CD4-positive, alpha-beta T cell (primary cell): ENCODE measurements at regions of chr20 and their contacts with region 1.

Region 1: GRCh38 chr20:38057351-38057972 is 23.9 kb downstream of the RPRD1B start:
- DNase-seq: peak; percentile 62 to 86 (median 72)
- ATAC-seq: peak; percentile 91
- H3K4me3 ChIP-seq: no peak overlapping the region
- H3K4me3 Mint-ChIP-seq: no peak overlapping the region
- H3K27ac ChIP-seq: no peak overlapping the region
- H3K27ac Mint-ChIP-seq: peak overlapping the region; percentile 50
- H3K4me1 ChIP-seq: peaks cover 3% of the 10 kb centered on the region
- H3K4me1 Mint-ChIP-seq: peaks cover 29% of the 10 kb centered on the region
- H3K27me3 ChIP-seq: no peaks in the 10 kb centered on the region
- H3K27me3 Mint-ChIP-seq: no peaks in the 10 kb centered on the region
- CTCF ChIP-seq: peak; percentile 93

Region 2: GRCh38 chr20:38043512-38044300 is 13.8 kb before region 1 on chr20:
- CTCF ChIA-PET with region 1: interaction called, 11 read pairs
- POLR2A ChIA-PET with region 1: interaction called, 3 read pairs
- intact Hi-C with region 1: no loop called
- DNase-seq: peak in 3 of 14 experiments; percentile 17 to 36 (median 32)
- ATAC-seq: no peak
- H3K4me3 ChIP-seq: no peak overlapping the region
- H3K4me3 Mint-ChIP-seq: no peak overlapping the region
- H3K27ac ChIP-seq: no peak overlapping the region
- H3K27ac Mint-ChIP-seq: no peak overlapping the region
- H3K4me1 ChIP-seq: peaks cover 3% of the 10 kb centered on the region
- H3K4me1 Mint-ChIP-seq: peaks cover 55% of the 10 kb centered on the region
- H3K27me3 ChIP-seq: no peaks in the 10 kb centered on the region
- H3K27me3 Mint-ChIP-seq: no peaks in the 10 kb centered on the region
- CTCF ChIP-seq: no peak

Region 3: DNA sequence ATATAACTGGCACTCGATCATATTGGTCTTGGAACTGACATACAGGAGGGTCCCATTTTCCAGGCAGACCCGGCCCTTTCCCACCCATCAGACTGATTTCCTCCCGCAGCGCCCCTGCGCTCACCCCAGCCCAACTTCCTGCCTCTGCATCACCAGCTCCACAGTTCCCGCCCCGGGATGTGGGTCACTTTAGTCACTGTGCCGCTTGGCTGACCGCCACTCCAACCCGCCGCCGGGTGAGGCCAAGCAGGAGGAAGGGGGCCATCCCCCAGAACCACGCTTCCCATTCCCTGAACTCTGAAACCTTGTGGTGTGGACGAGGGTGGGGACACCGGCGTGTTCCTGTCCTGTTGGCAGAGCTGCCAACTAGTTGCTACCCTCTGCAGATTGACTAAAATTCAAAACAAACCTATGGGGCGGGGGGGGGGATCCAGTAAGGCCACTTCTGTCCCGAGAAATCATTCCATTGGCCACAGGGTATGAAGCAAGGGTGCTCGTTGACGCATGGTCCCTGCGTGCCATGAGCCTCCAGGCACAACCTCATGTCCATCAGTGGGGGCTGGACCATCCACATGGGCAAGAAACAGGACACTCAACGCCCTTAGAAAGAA is 95.3 kb after region 1 on chr20:
- CTCF ChIA-PET with region 1: no interaction called
- POLR2A ChIA-PET with region 1: no interaction called
- intact Hi-C with region 1: no loop called
- DNase-seq: peak in 3 of 14 experiments; percentile 45 to 52 (median 52)
- ATAC-seq: no peak
- H3K4me3 ChIP-seq: no peak overlapping the region
- H3K4me3 Mint-ChIP-seq: no peak overlapping the region
- H3K27ac ChIP-seq: no peak overlapping the region
- H3K27ac Mint-ChIP-seq: no peak overlapping the region
- H3K4me1 ChIP-seq: peaks cover 11% of the 10 kb centered on the region
- H3K4me1 Mint-ChIP-seq: peaks cover 7% of the 10 kb centered on the region
- H3K27me3 ChIP-seq: no peaks in the 10 kb centered on the region
- H3K27me3 Mint-ChIP-seq: peaks cover 18% of the 10 kb centered on the region
- CTCF ChIP-seq: no peak

Region 4: DNA sequence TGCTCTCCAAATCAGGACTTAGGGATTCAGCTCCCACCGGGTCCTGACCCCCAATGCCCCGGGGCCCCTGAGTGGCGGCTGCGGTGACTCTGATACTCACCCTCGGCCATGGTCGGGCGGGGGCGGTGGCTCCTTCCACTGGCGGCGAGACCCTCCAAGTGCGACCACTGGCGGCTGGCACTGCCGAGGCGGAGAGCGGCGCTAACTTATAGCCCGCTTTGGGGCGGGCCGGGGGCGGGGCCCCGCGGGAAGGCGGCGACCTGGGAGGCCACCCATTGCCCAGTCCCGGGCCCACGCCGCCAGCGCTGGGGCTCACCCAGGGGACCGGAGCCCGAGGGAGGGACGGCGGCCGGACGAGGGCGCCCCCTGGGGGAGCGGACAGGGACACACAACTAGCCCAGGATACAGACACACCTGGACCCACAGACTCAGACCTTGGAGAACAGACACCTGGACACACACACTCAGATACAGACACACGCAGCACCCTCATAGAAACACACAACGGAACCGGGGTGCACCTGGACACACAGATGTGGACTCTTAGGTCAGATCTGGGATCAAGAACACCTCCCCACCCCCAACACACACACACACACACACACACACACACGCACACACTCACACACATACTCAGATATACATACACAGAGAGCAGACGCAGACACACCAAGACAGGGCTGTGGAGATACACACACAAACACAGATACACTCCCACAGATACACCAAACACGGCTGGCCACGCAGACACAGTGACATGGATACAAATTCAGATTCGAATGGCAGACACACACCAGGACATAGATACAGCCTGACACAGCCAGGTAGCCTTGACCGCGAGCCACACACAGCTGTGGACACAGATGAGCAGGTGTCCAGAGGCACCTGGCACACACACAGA is 107.9 kb after region 1 on chr20 and contains the start of gene TGM2:
- CTCF ChIA-PET with region 1: interaction called, 3 read pairs
- POLR2A ChIA-PET with region 1: no interaction called
- intact Hi-C with region 1: loop called (anchors 5 kb)
- DNase-seq: peak in 11 of 14 experiments; percentile 1 to 70 (median 15)
- ATAC-seq: peak; percentile 39
- H3K4me3 ChIP-seq: no peak within 1 kb of the TSS
- H3K4me3 Mint-ChIP-seq: no peak within 1 kb of the TSS
- H3K27ac ChIP-seq: no peak within 1 kb of the TSS
- H3K27ac Mint-ChIP-seq: no peak within 1 kb of the TSS
- H3K4me1 ChIP-seq: peaks cover 6% of the 10 kb centered on the region
- H3K4me1 Mint-ChIP-seq: no peaks in the 10 kb centered on the region
- H3K27me3 ChIP-seq: peaks cover 8 to 21% of the 10 kb centered on the region in 2 experiments
- H3K27me3 Mint-ChIP-seq: peaks cover 37% of the 10 kb centered on the region
- CTCF ChIP-seq: peak; percentile 41
- total RNA-seq, gene TGM2: 0.06 to 0.27 TPM

Region 5: GRCh38 chr20:38221119-38221589 is 163.7 kb after region 1 on chr20:
- CTCF ChIA-PET with region 1: interaction called, 11 read pairs
- POLR2A ChIA-PET with region 1: no interaction called
- intact Hi-C with region 1: loop called (anchors 1 kb)
- DNase-seq: peak; percentile 42 to 76 (median 58)
- ATAC-seq: peak; percentile 64
- H3K4me3 ChIP-seq: no peak overlapping the region
- H3K4me3 Mint-ChIP-seq: no peak overlapping the region
- H3K27ac ChIP-seq: no peak overlapping the region
- H3K27ac Mint-ChIP-seq: no peak overlapping the region
- H3K4me1 ChIP-seq: peaks cover 5% of the 10 kb centered on the region
- H3K4me1 Mint-ChIP-seq: no peaks in the 10 kb centered on the region
- H3K27me3 ChIP-seq: peaks cover 0 to 5% of the 10 kb centered on the region in 2 experiments
- H3K27me3 Mint-ChIP-seq: no peaks in the 10 kb centered on the region
- CTCF ChIP-seq: peak; percentile 76

Region 6: GRCh38 chr20:38357653-38358207 is 300.3 kb after region 1 on chr20:
- CTCF ChIA-PET with region 1: no interaction called
- POLR2A ChIA-PET with region 1: no interaction called
- intact Hi-C with region 1: loop called in 1 of 2 experiments (anchors 5 kb)
- DNase-seq: no peak
- ATAC-seq: no peak
- H3K4me3 ChIP-seq: no peak overlapping the region
- H3K4me3 Mint-ChIP-seq: no peak overlapping the region
- H3K27ac ChIP-seq: no peak overlapping the region
- H3K27ac Mint-ChIP-seq: no peak overlapping the region
- H3K4me1 ChIP-seq: no peaks in the 10 kb centered on the region
- H3K4me1 Mint-ChIP-seq: no peaks in the 10 kb centered on the region
- H3K27me3 ChIP-seq: no peaks in the 10 kb centered on the region
- H3K27me3 Mint-ChIP-seq: no peaks in the 10 kb centered on the region
- CTCF ChIP-seq: no peak